ENCODE measurements at regions of chr10 and their contacts with region 1.

Region 1: GRCh38 chr10:77251297-77252013 is 386.2 kb downstream of the KCNMA1 start:
- DNase-seq: peak in 1 of 2 donors; percentile 54
- ATAC-seq: peak; percentile 50 to 88 (median 72)
- H3K4me3 ChIP-seq: no peak overlapping the region
- H3K4me3 Mint-ChIP-seq: no peak overlapping the region
- H3K27ac ChIP-seq: no peak overlapping the region
- H3K27ac Mint-ChIP-seq: peak overlapping the region in 1 of 2 donors; percentile 30
- H3K4me1 ChIP-seq: peaks cover 15% of the 10 kb centered on the region
- H3K4me1 Mint-ChIP-seq: peaks cover 19 to 36% of the 10 kb centered on the region in 2 donors
- H3K27me3 ChIP-seq: no peaks in the 10 kb centered on the region
- H3K27me3 Mint-ChIP-seq: peaks cover 0 to 3% of the 10 kb centered on the region in 2 donors
- CTCF ChIP-seq: peak; percentile 77

Region 2: DNA sequence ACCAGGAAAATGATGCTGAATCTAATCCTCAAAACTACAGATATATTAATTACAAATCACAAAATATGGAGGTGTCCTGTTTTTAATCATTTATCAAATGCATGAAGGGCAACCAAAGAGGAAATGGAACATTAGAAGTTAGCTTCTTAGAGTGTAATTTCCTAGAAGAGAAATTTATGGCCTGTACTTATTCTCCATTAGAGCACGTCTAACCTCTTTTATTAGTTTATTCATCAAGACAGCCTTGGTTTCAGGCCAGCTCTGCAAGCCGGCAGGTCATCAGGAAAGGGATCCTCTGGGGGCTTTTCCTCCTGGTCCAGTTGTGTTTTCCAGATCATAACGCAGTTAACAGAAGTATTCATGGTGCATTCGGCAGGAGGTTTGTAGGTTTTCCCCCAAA is 131.4 kb before region 1 on chr10:
- intact Hi-C with region 1: no loop called
- DNase-seq: no peak
- ATAC-seq: no peak
- H3K4me3 ChIP-seq: no peak overlapping the region
- H3K4me3 Mint-ChIP-seq: no peak overlapping the region
- H3K27ac ChIP-seq: no peak overlapping the region
- H3K27ac Mint-ChIP-seq: no peak overlapping the region
- H3K4me1 ChIP-seq: no peaks in the 10 kb centered on the region
- H3K4me1 Mint-ChIP-seq: peaks cover 0 to under 1% of the 10 kb centered on the region in 2 donors
- H3K27me3 ChIP-seq: no peaks in the 10 kb centered on the region
- H3K27me3 Mint-ChIP-seq: peaks cover 5 to 26% of the 10 kb centered on the region in 2 donors
- CTCF ChIP-seq: no peak

Region 3: GRCh38 chr10:77641788-77642397 is 390.4 kb after region 1 on chr10:
- intact Hi-C with region 1: loop called (anchors 1 kb)
- DNase-seq: peak in 1 of 2 donors; percentile 75
- ATAC-seq: no peak
- H3K4me3 ChIP-seq: no peak overlapping the region
- H3K4me3 Mint-ChIP-seq: no peak overlapping the region
- H3K27ac ChIP-seq: no peak overlapping the region
- H3K27ac Mint-ChIP-seq: no peak overlapping the region
- H3K4me1 ChIP-seq: no peaks in the 10 kb centered on the region
- H3K4me1 Mint-ChIP-seq: peaks cover 5 to 6% of the 10 kb centered on the region in 2 donors
- H3K27me3 ChIP-seq: peaks cover 10% of the 10 kb centered on the region
- H3K27me3 Mint-ChIP-seq: peaks cover 38 to 51% of the 10 kb centered on the region in 2 donors
- CTCF ChIP-seq: peak; percentile 94

Measured in natural killer cell (primary cell).